ENCODE measurements at regions of chr7 and their contacts with region 1.

Region 1: GRCh38 chr7:151310578-151310977 is 31.0 kb upstream of the NUB1 start:
- DNase-seq: no peak
- ATAC-seq: no peak

Region 2: DNA sequence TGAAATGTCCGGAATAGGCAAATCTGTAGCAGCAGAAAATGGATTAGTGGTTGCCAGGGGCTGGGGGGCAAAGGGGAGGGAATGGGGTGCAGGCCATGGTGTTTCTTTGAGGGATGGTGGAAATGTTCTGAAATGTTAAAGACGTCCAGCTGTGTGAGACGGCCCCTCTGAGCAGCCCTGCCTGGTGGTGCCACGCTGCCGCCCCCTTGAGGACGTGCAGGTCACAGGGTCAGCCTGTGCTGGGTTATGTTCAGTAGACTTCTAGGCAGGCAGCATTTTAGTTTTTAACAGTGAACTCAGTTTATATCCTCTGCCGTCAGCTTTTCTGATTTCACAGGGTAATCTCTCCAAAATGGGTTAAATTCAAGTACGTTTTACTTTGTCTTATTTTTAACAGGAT is 40.4 kb after region 1 on chr7:
- intact Hi-C with region 1: loop called (anchors 5 kb)
- DNase-seq: no peak
- ATAC-seq: no peak

Measured in left ventricle myocardium superior (tissue), 1 donor.